ENCODE measurements at regions of chr7 and their contacts with region 1.

Region 1: DNA sequence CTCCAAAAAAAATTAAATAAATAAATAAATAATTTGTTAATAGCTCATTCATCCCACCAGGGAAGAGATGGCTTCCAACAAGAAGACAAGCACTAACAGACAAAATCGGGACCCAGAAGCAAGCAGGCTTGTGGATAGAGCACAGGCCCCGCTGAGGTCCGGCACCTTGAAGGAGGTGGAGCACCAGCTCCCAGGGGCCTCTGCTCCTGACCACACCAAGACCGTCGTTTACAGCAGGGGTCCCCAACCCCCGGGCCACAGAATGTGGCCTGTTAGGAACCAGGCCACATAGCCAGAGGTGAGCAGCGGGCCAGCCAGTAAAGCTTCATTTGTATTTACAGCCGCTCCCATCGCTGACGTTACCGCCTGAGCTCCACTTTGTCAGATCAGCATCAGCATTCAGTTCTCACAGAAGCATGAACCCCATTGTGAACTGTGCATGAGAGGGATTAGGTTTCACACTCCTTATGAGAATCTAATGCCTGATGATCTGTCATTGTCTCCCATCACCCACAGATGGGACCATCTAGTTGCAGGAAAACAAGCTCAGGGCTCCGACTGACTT is 33.3 kb upstream of the SUN1 start:
- DNase-seq: no peak
- CTCF ChIP-seq: no peak

Region 2: GRCh38 chr7:786472-787255 is 12.3 kb before region 1 on chr7:
- CTCF ChIA-PET with region 1: interaction called, 10 read pairs
- POLR2A ChIA-PET with region 1: no interaction called
- DNase-seq: peak; percentile 88
- CTCF ChIP-seq: peak; percentile 78

Measured in GM10248 (cell line).